Common myeloid progenitor, CD34-positive (primary cell): ENCODE measurements at regions of chr22 and their contacts with region 1.

Region 1: DNA sequence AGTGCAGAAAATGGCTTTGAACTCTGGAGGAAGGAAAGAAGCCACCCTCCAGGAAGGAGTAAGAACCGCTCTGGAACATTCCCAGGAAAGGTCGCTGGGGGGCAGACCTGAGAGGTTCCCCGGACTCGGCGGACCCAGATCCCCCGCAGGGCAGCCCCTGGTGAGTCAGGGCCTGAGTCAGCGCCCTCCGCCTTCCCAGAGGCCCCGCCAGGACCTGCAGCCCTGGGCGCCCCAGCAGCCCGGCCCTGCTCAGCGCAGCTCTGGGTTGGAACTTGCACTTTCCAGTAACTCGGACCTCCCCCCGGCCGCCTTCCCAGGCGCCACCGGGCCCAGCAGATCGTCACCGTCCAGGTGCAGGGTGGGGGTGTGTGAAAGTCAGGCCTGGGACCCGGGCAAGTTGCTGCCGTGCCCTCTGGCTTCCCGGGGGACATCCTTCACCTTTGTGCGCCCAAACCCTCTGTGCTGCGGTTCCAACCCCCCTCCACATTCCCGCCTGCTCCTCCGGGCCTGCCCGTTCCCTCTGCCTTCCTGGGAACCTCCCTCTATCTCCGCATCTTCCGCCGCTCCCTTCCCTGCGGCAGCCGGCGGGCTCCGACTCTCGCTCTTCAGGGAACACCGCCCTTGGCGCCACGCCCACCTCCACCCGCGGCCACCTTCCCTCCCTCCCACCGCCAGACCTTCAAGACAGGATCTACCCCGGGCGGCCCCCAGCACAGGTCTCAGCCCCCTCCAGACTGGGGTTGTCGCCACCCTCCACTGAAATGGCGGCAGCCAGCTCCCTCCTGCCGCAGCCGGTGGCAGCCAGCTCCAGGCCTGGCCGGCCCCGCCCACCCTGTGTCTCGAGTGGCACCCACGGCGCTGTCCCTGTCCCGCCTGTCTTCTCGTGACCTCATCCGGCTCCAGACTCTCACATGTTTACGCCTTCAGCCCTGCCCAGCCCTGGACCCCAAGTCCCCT is 36.8 kb upstream of the WNT7B start:
- DNase-seq: peak; percentile 92 to 96 (median 95)
- H3K4me3 ChIP-seq: peak overlapping the region; percentile 67 to 94 (median 81)
- H3K27ac ChIP-seq: peak overlapping the region; percentile 72 to 85
- H3K4me1 ChIP-seq: peaks cover 3 to 30% (median 23%) of the 10 kb centered on the region in 4 experiments
- H3K27me3 ChIP-seq: no peaks in the 10 kb centered on the region

Region 2: GRCh38 chr22:46027192-46028105 is 13.7 kb after region 1 on chr22:
- CTCF ChIA-PET with region 1: interaction called, 50 read pairs
- POLR2A ChIA-PET with region 1: interaction called, 8 read pairs
- DNase-seq: peak in 1 of 3 donors; percentile 43
- H3K4me3 ChIP-seq: peak overlapping the region in 5 of 7 experiments; percentile 8 to 71 (median 43)
- H3K27ac ChIP-seq: no peak overlapping the region
- H3K4me1 ChIP-seq: peaks cover 0 to 56% (median 39%) of the 10 kb centered on the region in 4 experiments
- H3K27me3 ChIP-seq: peaks cover 0 to 13% (median 0%) of the 10 kb centered on the region in 5 experiments

Region 3: DNA sequence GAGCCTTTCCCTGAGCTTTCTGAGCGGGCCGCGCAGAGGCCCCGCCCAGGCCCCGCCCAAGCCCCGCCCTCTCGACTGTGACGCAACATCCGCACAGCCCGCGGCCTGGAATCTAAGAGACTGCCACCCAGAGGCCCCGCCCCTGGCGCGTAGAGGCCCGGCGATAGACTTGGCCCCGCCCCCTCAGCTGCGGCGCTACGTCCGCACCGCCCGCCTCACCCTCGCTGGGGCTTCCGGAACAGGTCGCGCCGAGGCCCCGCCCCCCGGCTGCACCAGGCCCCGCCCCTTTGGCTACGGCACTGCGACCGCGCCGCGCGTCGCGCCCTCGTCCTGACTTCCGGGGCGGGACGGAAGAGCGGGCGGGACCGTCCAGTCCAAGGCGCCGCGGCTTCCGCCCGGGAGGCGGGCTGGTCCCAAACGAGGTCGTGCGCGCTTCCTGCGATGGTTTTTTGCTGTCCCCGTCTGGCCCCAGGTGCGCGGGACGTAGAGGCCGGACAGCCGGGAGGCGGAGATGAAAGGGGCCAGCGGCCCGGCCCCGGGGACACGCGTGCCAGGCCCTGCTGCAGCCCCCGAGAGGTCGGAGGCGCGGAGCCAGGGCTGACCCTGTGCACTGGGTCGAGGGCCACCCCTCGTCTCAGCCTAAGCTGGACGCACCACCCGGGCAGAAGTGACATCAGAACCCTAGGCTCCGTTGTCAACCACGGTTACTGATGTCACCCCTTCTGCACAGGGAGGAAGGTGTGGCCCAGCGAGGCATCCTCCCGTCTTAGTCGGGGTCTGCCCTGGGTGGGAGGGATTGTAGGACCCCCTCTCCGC is 22.2 kb after region 1 on chr22:
- CTCF ChIA-PET with region 1: interaction called, 75 read pairs
- POLR2A ChIA-PET with region 1: interaction called, 10 read pairs
- DNase-seq: peak; percentile 98 to 99 (median 99)
- H3K4me3 ChIP-seq: peak overlapping the region; percentile 63 to 90 (median 87)
- H3K27ac ChIP-seq: peak overlapping the region; percentile 58 to 89
- H3K4me1 ChIP-seq: peaks cover 0 to 55% (median 38%) of the 10 kb centered on the region in 4 experiments
- H3K27me3 ChIP-seq: peaks cover 0 to 2% (median 0%) of the 10 kb centered on the region in 5 experiments

Region 4: GRCh38 chr22:46044621-46045438 is 31.1 kb after region 1 on chr22:
- CTCF ChIA-PET with region 1: interaction called, 19 read pairs
- POLR2A ChIA-PET with region 1: interaction called, 3 read pairs
- DNase-seq: no peak
- H3K4me3 ChIP-seq: peak overlapping the region; percentile 35 to 83 (median 63)
- H3K27ac ChIP-seq: peak overlapping the region; percentile 68 to 76
- H3K4me1 ChIP-seq: peaks cover 0 to 72% (median 25%) of the 10 kb centered on the region in 4 experiments
- H3K27me3 ChIP-seq: peaks cover 0 to 15% (median 0%) of the 10 kb centered on the region in 5 experiments

Region 5: GRCh38 chr22:46071451-46072109 is 57.8 kb after region 1 on chr22:
- CTCF ChIA-PET with region 1: interaction called, 27 read pairs
- POLR2A ChIA-PET with region 1: interaction called, 5 read pairs
- DNase-seq: peak; percentile 78 to 92 (median 91)
- H3K4me3 ChIP-seq: peak overlapping the region; percentile 64 to 91 (median 77)
- H3K27ac ChIP-seq: peak overlapping the region; percentile 46 to 78
- H3K4me1 ChIP-seq: peaks cover 3 to 71% (median 36%) of the 10 kb centered on the region in 4 experiments
- H3K27me3 ChIP-seq: peaks cover 0 to 36% (median 0%) of the 10 kb centered on the region in 5 experiments

Region 6: GRCh38 chr22:46116491-46116958 is 102.8 kb after region 1 on chr22:
- CTCF ChIA-PET with region 1: interaction called, 105 read pairs
- POLR2A ChIA-PET with region 1: no interaction called
- DNase-seq: peak; percentile 79 to 90 (median 87)
- H3K4me3 ChIP-seq: no peak overlapping the region
- H3K27ac ChIP-seq: no peak overlapping the region
- H3K4me1 ChIP-seq: peaks cover 0 to 22% (median 14%) of the 10 kb centered on the region in 4 experiments
- H3K27me3 ChIP-seq: no peaks in the 10 kb centered on the region